H1 (cell line): ENCODE measurements at regions of chr1 and their contacts with region 1.

Region 1: GRCh38 chr1:163071405-163072255 is 2.5 kb downstream of the RGS4 start:
- DNase-seq: peak; percentile 3 to 63
- H3K4me3 ChIP-seq: no peak overlapping the region
- H3K27ac ChIP-seq: no peak overlapping the region
- H3K4me1 ChIP-seq: no peaks in the 10 kb centered on the region; a peak in 1 of 7 replicates
- H3K27me3 ChIP-seq: no peaks in the 10 kb centered on the region
- CTCF ChIP-seq: peak; percentile 73 to 86 (median 77)
- EP300 ChIP-seq: no peak
- POLR2A ChIP-seq: no peak
- RAD21 ChIP-seq: peak; percentile 65 to 72

Region 2: DNA sequence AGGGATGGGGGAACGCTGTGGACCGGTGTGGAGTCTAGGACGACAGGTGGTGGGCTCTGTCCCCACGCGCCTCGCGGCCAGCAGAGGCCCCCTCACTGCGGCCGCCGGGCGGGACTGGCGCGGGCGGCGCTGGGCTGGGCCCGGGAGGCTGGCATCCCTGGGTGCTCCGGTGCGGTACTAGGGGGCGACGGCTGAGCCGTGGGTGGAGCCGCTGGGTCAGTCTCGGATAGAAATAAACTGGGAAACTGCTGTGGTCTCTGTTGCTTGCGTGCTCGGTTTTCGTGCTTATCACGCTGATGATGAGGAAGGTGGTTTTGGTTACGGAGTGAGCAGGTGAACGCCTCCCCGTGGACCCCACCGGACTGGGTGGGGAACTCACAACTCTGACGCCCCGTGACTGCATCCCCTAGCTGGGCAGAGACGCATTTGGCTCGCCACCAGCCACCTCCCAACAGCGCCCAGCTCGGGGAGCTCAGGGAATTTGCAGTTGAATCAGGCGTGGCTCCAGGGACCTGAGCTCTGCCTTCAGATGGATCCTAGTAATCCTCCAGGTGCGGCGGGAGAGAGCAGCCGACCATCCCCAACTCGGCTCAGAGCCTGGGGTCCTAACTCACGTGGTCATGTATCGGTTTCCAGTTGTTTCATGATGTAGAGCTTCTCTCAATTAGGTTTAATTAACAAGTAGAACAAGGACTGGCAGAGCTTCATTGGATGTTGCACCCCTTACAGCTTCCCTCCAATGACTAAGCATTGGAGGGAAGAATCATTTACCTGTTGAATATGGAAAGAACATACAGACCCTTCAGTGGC is 249.0 kb before region 1 on chr1:
- CTCF ChIA-PET with region 1: no interaction called
- POLR2A ChIA-PET with region 1: no interaction called
- DNase-seq: peak; percentile 44 to 78
- H3K4me3 ChIP-seq: peak overlapping the region; percentile 56 to 75 (median 73)
- H3K27ac ChIP-seq: no peak overlapping the region
- H3K4me1 ChIP-seq: peaks cover 0 to 5% (median 1%) of the 10 kb centered on the region in 4 experiments; a peak in 4 of 7 replicates
- H3K27me3 ChIP-seq: no peaks in the 10 kb centered on the region
- CTCF ChIP-seq: peak; percentile 44 to 52 (median 44); a peak in 3 of 4 replicates
- EP300 ChIP-seq: no peak
- POLR2A ChIP-seq: peak in 1 of 2 experiments; percentile 78; a peak in 2 of 3 replicates
- RAD21 ChIP-seq: peak in 1 of 2 experiments; percentile 35; a peak in 2 of 4 replicates

Region 3: DNA sequence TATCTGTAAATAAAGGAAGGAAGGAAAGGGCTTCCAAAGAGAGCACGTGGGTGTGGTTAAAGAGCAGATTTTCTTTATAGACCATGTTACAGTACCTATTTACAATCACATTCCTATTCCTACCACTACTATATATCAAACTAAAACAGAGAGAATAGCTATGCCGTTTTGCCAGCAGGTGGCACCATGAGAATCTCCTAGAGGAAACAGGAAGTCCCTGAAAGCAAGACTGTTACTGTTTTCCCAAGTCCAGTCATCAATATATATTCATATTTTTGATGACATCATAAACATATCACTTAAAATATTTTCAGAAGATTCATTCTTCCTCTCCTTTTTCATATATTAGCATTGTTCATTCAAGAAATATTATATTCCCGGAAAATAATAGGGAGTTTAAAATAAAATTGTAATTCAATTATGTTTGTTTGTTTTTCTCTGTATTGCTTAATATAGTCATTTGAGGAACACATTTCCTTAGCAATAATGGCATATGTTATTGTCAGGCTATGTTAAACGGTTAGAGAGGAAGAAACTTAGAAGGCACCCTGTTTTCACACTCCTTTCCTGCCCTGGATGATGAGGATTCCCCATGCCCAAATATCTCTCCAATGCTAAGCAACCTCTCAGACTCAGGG is 217.3 kb before region 1 on chr1:
- CTCF ChIA-PET with region 1: interaction called, 25 read pairs
- POLR2A ChIA-PET with region 1: no interaction called
- DNase-seq: no peak
- H3K4me3 ChIP-seq: no peak overlapping the region
- H3K27ac ChIP-seq: no peak overlapping the region
- H3K4me1 ChIP-seq: no peaks in the 10 kb centered on the region
- H3K27me3 ChIP-seq: no peaks in the 10 kb centered on the region
- CTCF ChIP-seq: peak in 2 of 3 experiments; percentile 52 to 69; a peak in 3 of 4 replicates
- EP300 ChIP-seq: no peak
- POLR2A ChIP-seq: no peak
- RAD21 ChIP-seq: peak; percentile 67 to 68

Region 4: DNA sequence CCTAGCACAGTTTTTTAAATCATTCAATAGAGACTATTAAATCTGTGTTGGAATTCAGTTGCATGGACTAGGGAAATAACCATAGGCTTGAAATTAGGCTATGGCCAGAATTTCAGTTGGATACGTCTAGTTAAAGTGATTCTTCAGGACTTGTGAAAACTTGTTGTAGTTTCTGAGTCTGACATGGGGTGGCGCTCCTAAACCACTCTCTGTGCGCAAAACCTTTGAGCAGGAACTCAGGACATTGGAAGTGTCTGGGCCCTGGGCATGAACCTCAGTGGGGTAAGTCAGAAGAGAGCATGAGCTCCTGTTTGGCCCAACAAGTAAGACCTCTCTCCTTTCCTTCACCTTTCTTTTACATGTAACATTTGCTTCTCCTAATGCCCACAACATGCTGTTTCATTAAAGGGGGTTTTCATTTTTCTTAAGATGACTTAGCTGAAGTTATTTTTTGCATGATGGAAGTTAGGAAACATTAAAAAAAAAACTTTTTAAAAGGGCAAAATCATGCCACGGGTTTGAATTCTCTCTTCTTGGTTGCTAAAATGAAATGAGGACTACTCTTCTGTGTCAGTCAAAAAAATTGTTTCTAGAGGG is 193.5 kb before region 1 on chr1:
- CTCF ChIA-PET with region 1: interaction called, 58 read pairs
- POLR2A ChIA-PET with region 1: no interaction called
- DNase-seq: peak; percentile 31 to 87
- H3K4me3 ChIP-seq: no peak overlapping the region
- H3K27ac ChIP-seq: no peak overlapping the region
- H3K4me1 ChIP-seq: peaks cover 0 to 3% (median 0%) of the 10 kb centered on the region in 4 experiments; a peak in 2 of 7 replicates
- H3K27me3 ChIP-seq: no peaks in the 10 kb centered on the region
- CTCF ChIP-seq: peak; percentile 45 to 92 (median 86)
- EP300 ChIP-seq: no peak
- POLR2A ChIP-seq: no peak
- RAD21 ChIP-seq: peak; percentile 99

Region 5: DNA sequence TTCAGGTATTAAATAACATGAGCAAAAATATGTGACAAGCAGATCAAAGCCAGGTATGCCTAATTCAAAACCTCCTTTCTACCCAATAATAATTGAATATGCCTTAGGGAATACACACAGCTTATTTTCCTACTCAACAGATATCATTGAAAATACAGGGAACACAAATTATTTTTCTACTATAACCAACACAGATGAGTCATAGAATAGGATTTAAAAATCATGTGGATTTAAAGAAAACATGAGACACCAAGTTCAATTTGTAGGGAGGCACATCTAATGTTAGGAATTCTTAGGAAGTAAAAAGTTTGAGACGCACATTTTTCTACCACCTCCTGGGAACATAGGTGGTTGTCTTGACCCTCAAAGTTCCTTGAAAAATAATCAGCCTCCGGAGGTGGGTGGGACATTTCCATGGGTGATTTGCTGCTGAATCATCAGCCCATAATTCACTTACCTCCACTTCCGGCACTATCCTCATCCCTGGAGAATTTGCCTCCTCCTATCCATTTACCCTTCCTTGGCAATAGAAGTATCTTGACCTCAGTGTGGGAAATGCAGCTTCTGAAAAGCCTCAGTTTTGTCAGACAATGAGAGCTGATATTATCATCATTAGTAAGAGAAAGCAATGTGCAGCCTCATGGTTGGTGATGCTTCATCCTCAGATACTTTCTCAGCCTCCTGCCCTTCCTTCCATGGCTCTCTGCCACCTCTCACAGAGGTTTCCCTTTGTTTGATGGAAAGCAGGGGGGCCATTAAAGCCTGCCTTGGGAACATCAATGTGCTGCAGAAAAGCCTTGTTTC is 36.0 kb before region 1 on chr1:
- CTCF ChIA-PET with region 1: interaction called, 12 read pairs
- POLR2A ChIA-PET with region 1: no interaction called
- DNase-seq: no peak
- H3K4me3 ChIP-seq: no peak overlapping the region
- H3K27ac ChIP-seq: no peak overlapping the region
- H3K4me1 ChIP-seq: no peaks in the 10 kb centered on the region
- H3K27me3 ChIP-seq: no peaks in the 10 kb centered on the region
- CTCF ChIP-seq: no peak
- EP300 ChIP-seq: no peak
- POLR2A ChIP-seq: no peak
- RAD21 ChIP-seq: no peak

Region 6: GRCh38 chr1:163085041-163085903 is 13.6 kb after region 1 on chr1:
- CTCF ChIA-PET with region 1: interaction called, 12 read pairs
- POLR2A ChIA-PET with region 1: no interaction called
- DNase-seq: no peak
- H3K4me3 ChIP-seq: no peak overlapping the region
- H3K27ac ChIP-seq: no peak overlapping the region
- H3K4me1 ChIP-seq: no peaks in the 10 kb centered on the region
- H3K27me3 ChIP-seq: no peaks in the 10 kb centered on the region
- CTCF ChIP-seq: no peak
- EP300 ChIP-seq: no peak
- POLR2A ChIP-seq: no peak
- RAD21 ChIP-seq: no peak